ENCODE measurements at regions of chr18 and their contacts with region 1.

Region 1: GRCh38 chr18:623761-624620 is 27.2 kb downstream of the CLUL1 start:
- DNase-seq: peak; percentile 15
- ATAC-seq: no peak
- H3K4me3 Mint-ChIP-seq: no peak overlapping the region
- H3K27ac Mint-ChIP-seq: no peak overlapping the region
- H3K4me1 Mint-ChIP-seq: no peaks in the 10 kb centered on the region
- H3K27me3 Mint-ChIP-seq: peaks cover 6% of the 10 kb centered on the region
- CTCF ChIP-seq: no peak

Region 2: GRCh38 chr18:697800-698199 is 73.8 kb after region 1 on chr18:
- CTCF ChIA-PET with region 1: no interaction called
- POLR2A ChIA-PET with region 1: no interaction called
- intact Hi-C with region 1: no loop called
- DNase-seq: no peak
- ATAC-seq: no peak
- H3K4me3 Mint-ChIP-seq: no peak overlapping the region
- H3K27ac Mint-ChIP-seq: no peak overlapping the region
- H3K4me1 Mint-ChIP-seq: no peaks in the 10 kb centered on the region
- H3K27me3 Mint-ChIP-seq: no peaks in the 10 kb centered on the region
- CTCF ChIP-seq: no peak

Region 3: GRCh38 chr18:830315-830901 is 206.4 kb after region 1 on chr18:
- CTCF ChIA-PET with region 1: interaction called, 49 read pairs
- POLR2A ChIA-PET with region 1: no interaction called
- intact Hi-C with region 1: loop called (anchors 1 kb)
- DNase-seq: no peak
- ATAC-seq: no peak
- H3K4me3 Mint-ChIP-seq: peak overlapping the region; percentile 6
- H3K27ac Mint-ChIP-seq: no peak overlapping the region
- H3K4me1 Mint-ChIP-seq: peaks cover 10% of the 10 kb centered on the region
- H3K27me3 Mint-ChIP-seq: peaks cover 19% of the 10 kb centered on the region
- CTCF ChIP-seq: no peak

Region 4: GRCh38 chr18:839224-840022 is 215.4 kb after region 1 on chr18:
- CTCF ChIA-PET with region 1: interaction called, 35 read pairs
- POLR2A ChIA-PET with region 1: no interaction called
- intact Hi-C with region 1: no loop called
- DNase-seq: peak; percentile 70
- ATAC-seq: peak; percentile 87
- H3K4me3 Mint-ChIP-seq: no peak overlapping the region
- H3K27ac Mint-ChIP-seq: no peak overlapping the region
- H3K4me1 Mint-ChIP-seq: no peaks in the 10 kb centered on the region
- H3K27me3 Mint-ChIP-seq: peaks cover 9% of the 10 kb centered on the region
- CTCF ChIP-seq: peak; percentile 31

Region 5: GRCh38 chr18:2540575-2540974 is 1916.6 kb after region 1 on chr18:
- CTCF ChIA-PET with region 1: no interaction called
- POLR2A ChIA-PET with region 1: no interaction called
- intact Hi-C with region 1: loop called (anchors 5 kb)
- DNase-seq: no peak
- ATAC-seq: no peak
- H3K4me3 Mint-ChIP-seq: no peak overlapping the region
- H3K27ac Mint-ChIP-seq: no peak overlapping the region
- H3K4me1 Mint-ChIP-seq: peaks cover 17% of the 10 kb centered on the region
- H3K27me3 Mint-ChIP-seq: no peaks in the 10 kb centered on the region
- CTCF ChIP-seq: no peak

Measured in activated B cell treated with CpG ODN at 0.5 μM for 24 hours (primary cell).